Activated CD4-positive, alpha-beta memory T cell treated with anti-CD3 and anti-CD28 coated beads for 36 hours (primary cell): ENCODE measurements at regions of chr15 and their contacts with region 1.

Region 1: DNA sequence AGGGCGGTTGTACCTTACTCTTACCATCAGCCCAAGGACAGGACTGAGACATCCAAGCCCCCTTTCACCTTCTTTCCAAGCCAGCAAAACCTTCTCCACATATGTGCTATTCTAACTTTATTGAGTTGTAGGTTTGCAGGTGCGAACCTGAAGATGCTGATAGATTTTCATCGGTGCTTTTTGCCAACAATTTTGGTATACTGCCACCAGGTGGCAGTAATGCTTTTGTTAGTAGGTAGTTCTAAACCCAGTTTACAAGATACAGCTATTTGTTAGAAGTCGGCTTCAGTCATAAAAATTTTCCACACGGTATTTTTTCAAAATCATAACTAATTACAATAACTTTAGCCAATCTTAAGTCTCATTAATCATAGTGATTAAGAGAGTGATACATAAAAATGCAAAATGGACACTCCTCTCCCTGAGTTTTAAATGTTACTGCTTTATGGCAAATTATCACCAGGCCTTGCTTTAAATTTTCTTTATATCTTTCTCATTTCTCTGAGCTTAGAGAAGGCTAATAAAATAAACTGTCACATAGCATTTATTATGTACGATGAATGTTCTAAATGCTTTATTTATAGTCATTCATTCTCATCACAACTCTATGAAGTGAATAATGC is 636 bp downstream of the TBC1D21 start:
- DNase-seq: peak; percentile 35
- H3K4me3 Mint-ChIP-seq: no peak overlapping the region
- H3K27ac Mint-ChIP-seq: no peak overlapping the region
- H3K4me1 Mint-ChIP-seq: no peaks in the 10 kb centered on the region
- H3K27me3 Mint-ChIP-seq: peaks cover 35% of the 10 kb centered on the region

Region 2: DNA sequence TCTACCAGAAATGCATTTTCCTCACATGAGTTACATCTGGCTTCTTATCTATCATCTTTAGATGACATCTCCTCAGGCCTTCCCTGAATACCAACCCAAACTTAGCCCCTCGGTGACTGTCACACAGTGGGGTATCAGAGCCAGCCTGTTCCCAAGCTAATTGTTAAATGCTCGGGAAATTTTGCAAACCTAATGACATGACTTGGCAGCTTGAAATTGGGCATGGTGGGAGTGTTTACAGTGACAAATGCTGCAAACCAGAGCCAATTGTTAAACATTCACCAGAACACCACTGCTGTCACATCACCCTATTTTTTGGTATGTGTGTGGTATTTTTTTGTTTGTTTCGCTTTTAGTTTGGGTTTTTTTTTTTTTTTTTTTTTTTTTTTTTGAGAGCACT is 636.1 kb before region 1 on chr15:
- CTCF ChIA-PET with region 1: no interaction called
- POLR2A ChIA-PET with region 1: no interaction called
- intact Hi-C with region 1: no loop called
- DNase-seq: no peak
- H3K4me3 Mint-ChIP-seq: no peak overlapping the region
- H3K27ac Mint-ChIP-seq: no peak overlapping the region
- H3K4me1 Mint-ChIP-seq: no peaks in the 10 kb centered on the region
- H3K27me3 Mint-ChIP-seq: no peaks in the 10 kb centered on the region

Region 3: DNA sequence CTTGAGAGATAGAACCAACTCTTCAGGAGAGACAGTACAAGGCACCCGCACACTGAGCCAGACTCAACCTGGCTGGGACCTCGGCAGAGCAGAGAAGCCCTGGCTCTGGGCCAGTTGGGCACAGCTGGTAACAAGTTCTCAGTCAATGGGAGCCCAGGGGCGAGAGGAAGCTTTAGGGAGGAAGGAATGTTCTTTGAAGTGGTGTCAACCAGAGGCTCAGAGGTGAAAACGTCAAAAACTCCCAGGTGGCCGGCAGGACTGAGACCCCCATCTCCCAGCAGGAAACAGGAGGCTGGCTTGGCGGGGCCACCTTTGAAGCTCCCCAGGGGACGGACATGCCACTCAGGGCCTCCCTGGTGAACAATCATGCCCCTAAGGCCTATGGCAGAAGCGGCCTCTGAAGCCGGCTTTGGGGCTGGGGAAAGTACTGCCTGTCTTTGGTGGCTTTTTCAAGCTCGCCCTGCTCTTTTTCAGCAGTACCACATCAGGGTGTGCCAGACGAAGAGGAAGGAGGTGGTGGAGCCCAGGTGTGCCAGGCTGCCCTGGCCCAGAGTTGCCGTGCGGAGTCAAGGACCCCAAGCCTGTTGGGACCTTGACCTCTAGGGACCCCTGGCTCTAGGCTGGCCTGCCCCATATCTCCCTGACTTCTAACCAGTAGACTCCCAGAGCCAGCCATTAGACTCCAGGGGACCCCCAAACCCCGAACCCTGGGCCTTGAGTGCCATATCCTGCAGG is 17.4 kb before region 1 on chr15:
- CTCF ChIA-PET with region 1: interaction called, 16 read pairs
- POLR2A ChIA-PET with region 1: no interaction called
- intact Hi-C with region 1: no loop called
- DNase-seq: no peak
- H3K4me3 Mint-ChIP-seq: no peak overlapping the region
- H3K27ac Mint-ChIP-seq: no peak overlapping the region
- H3K4me1 Mint-ChIP-seq: no peaks in the 10 kb centered on the region
- H3K27me3 Mint-ChIP-seq: peaks cover 42% of the 10 kb centered on the region

Region 4: DNA sequence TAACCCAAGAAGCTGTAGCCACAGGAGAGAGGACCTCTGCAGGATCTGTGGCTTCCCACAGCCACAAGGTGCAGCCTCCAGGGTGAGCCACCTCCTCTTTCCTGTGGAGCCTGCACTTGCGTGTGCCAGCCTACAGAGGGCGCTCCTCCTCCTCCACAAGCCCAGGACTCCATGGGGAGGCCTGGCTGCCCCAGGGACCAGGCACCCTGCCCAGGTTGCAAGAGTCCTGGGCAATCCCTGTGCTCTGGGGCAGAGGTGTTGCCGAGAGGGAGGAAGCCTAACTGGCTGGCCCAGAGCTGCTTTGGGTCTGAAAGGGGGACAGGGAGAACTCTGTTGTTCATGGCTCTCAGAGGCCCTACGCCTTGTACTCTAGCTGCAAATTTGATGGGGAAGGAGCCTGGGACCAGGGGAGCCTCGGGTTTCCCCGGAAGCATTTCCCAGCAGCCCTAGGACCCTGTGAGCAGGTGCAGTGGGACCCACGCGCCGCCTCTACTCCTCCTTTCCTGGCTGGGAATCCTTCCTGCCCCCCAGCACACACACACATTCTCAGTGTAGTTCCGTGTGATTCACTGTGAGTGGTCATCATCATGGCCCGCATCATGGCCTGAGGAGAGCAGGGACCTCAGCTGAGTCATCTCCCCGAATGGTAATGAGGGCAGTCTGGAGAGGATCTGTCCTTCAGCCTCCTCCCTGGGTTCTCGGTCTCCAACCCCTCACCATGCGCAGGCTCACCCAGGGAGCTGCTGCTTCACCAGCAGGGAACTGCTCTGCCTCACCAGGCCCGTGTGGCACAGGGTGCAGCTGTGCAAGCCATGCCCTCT is 23.7 kb after region 1 on chr15:
- CTCF ChIA-PET with region 1: interaction called, 28 read pairs
- POLR2A ChIA-PET with region 1: no interaction called
- intact Hi-C with region 1: no loop called
- DNase-seq: peak; percentile 82
- H3K4me3 Mint-ChIP-seq: no peak overlapping the region
- H3K27ac Mint-ChIP-seq: no peak overlapping the region
- H3K4me1 Mint-ChIP-seq: no peaks in the 10 kb centered on the region
- H3K27me3 Mint-ChIP-seq: no peaks in the 10 kb centered on the region

Region 5: DNA sequence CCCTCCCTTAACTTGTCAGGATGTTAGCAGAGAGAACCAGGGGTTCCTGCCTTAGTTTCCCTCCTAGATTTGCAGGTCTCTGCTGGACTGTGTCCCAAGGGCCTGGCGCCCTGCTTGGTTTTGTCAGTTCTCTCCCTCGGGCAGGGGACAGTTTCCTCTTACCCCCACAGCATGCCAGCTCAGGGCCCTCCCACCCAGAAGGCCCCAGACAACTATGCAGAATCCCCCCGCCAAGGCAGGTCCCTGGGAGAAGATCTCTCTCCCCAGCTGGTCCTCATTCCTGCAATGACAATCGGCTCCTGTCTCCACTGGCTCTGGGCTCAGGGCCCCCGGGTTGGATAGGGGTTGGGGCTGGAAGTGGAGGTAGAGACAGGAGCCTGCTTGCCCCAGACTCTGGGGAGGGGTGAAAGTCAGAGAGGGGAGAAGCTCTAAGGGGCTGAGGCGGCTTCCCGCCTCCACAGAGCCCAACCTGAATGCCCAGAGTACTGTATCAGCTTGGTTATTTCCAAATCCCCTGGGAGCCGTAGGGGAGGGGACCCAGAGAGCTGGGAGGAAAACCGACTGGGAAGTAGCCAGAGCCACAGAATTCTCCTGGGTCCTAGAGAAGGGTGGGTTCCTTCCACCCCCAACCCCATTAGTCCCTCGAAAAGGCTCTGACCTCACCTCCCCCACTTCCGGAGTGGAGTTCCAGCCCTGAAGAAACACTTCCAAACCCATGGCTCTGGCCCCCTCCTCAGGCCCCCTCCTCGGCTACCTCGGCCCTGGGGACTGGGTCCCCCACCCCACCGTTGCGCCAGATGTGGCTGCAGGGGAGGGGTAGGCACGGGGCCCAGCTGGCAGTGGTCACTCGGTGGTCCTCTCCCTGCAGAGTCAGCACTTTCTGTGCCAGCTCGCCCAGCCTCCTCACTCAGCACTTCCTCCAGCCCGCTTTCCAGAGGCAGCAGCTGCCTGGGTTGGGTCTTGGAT is 48.5 kb after region 1 on chr15:
- CTCF ChIA-PET with region 1: interaction called, 21 read pairs
- POLR2A ChIA-PET with region 1: no interaction called
- intact Hi-C with region 1: no loop called
- DNase-seq: no peak
- H3K4me3 Mint-ChIP-seq: no peak overlapping the region
- H3K27ac Mint-ChIP-seq: peak overlapping the region; percentile 81
- H3K4me1 Mint-ChIP-seq: peaks cover 53% of the 10 kb centered on the region
- H3K27me3 Mint-ChIP-seq: no peaks in the 10 kb centered on the region

Region 6: GRCh38 chr15:73964736-73965093 is 90.7 kb after region 1 on chr15:
- CTCF ChIA-PET with region 1: interaction called, 24 read pairs
- POLR2A ChIA-PET with region 1: no interaction called
- intact Hi-C with region 1: no loop called
- DNase-seq: peak; percentile 93
- H3K4me3 Mint-ChIP-seq: peak overlapping the region; percentile 69
- H3K27ac Mint-ChIP-seq: peak overlapping the region; percentile 85
- H3K4me1 Mint-ChIP-seq: peaks cover 27% of the 10 kb centered on the region
- H3K27me3 Mint-ChIP-seq: no peaks in the 10 kb centered on the region

Region 7: GRCh38 chr15:74222240-74223119 is 348.5 kb after region 1 on chr15:
- CTCF ChIA-PET with region 1: no interaction called
- POLR2A ChIA-PET with region 1: no interaction called
- intact Hi-C with region 1: no loop called
- DNase-seq: no peak
- H3K4me3 Mint-ChIP-seq: no peak overlapping the region
- H3K27ac Mint-ChIP-seq: no peak overlapping the region
- H3K4me1 Mint-ChIP-seq: no peaks in the 10 kb centered on the region
- H3K27me3 Mint-ChIP-seq: peaks cover 25% of the 10 kb centered on the region